Endothelial cell of umbilical vein (primary cell): ENCODE measurements at regions of chr17 and their contacts with region 1.

Region 1: GRCh38 chr17:4966844-4967538 is 626 bp downstream of the SPAG7 start:
- DNase-seq: peak; percentile 100
- H3K4me3 ChIP-seq: peak overlapping the region; percentile 14 to 87 (median 63)
- H3K27ac ChIP-seq: peak overlapping the region; percentile 69
- H3K4me1 ChIP-seq: peaks cover 24% of the 10 kb centered on the region
- H3K27me3 ChIP-seq: no peaks in the 10 kb centered on the region
- CTCF ChIP-seq: no peak
- POLR2A ChIP-seq: no peak

Region 2: GRCh38 chr17:4872786-4873185 is 94.2 kb before region 1 on chr17:
- CTCF ChIA-PET with region 1: no interaction called
- POLR2A ChIA-PET with region 1: no interaction called
- dilution Hi-C with region 1: no loop called
- intact Hi-C with region 1: no loop called
- DNase-seq: peak; percentile 75
- H3K4me3 ChIP-seq: no peak overlapping the region
- H3K27ac ChIP-seq: no peak overlapping the region
- H3K4me1 ChIP-seq: peaks cover 7% of the 10 kb centered on the region
- H3K27me3 ChIP-seq: no peaks in the 10 kb centered on the region
- CTCF ChIP-seq: no peak
- POLR2A ChIP-seq: no peak

Region 3: GRCh38 chr17:4939796-4940624 is 27.0 kb before region 1 on chr17 and contains the starts of genes RNF167 and SLC25A11:
- CTCF ChIA-PET with region 1: interaction called, 9 read pairs
- POLR2A ChIA-PET with region 1: interaction called, 15 read pairs
- dilution Hi-C with region 1: no loop called
- intact Hi-C with region 1: loop called (anchors 1 kb)
- DNase-seq: peak; percentile 100
- H3K4me3 ChIP-seq: peak within 1 kb of the TSS; percentile 45 to 84 (median 77)
- H3K27ac ChIP-seq: peak within 1 kb of the TSS; percentile 81
- H3K4me1 ChIP-seq: peaks cover 21% of the 10 kb centered on the region
- H3K27me3 ChIP-seq: no peaks in the 10 kb centered on the region
- CTCF ChIP-seq: no peak
- POLR2A ChIP-seq: peak; percentile 85
- total RNA-seq, gene RNF167: 60.2 and 61.0 TPM in 2 replicates
- total RNA-seq, gene SLC25A11: 50.2 and 58.2 TPM in 2 replicates

Region 4: DNA sequence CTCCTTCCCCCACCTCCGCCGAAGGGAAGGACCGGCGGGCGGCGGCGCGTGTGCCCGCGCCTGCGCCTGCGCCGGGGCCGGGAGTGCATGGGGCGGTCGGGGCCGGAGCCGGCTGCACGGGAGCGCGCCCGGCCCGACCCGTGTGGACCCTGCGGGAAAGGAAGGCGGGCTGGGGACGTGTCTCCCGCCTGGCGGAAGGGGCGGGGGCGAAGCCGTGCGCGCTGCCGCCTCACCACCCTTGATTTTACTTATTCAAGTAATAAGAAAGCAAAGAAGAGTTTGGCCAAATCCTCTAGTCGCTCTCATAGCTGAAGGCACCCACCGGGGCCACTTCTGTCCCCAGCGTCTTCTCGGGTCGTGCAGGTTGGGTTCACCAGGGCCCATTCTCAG is 18.1 kb before region 1 on chr17:
- CTCF ChIA-PET with region 1: interaction called, 11 read pairs
- POLR2A ChIA-PET with region 1: interaction called, 18 read pairs
- dilution Hi-C with region 1: no loop called
- intact Hi-C with region 1: loop called (anchors 1 kb)
- DNase-seq: peak; percentile 88
- H3K4me3 ChIP-seq: peak overlapping the region; percentile 81 to 99 (median 95)
- H3K27ac ChIP-seq: peak overlapping the region; percentile 90
- H3K4me1 ChIP-seq: peaks cover 44% of the 10 kb centered on the region
- H3K27me3 ChIP-seq: no peaks in the 10 kb centered on the region
- CTCF ChIP-seq: no peak
- POLR2A ChIP-seq: peak; percentile 51

Region 5: GRCh38 chr17:4956493-4957061 is 10.4 kb before region 1 on chr17:
- CTCF ChIA-PET with region 1: interaction called, 11 read pairs
- POLR2A ChIA-PET with region 1: interaction called, 15 read pairs
- dilution Hi-C with region 1: no loop called
- intact Hi-C with region 1: no loop called
- DNase-seq: no peak
- H3K4me3 ChIP-seq: no peak overlapping the region
- H3K27ac ChIP-seq: no peak overlapping the region
- H3K4me1 ChIP-seq: peaks cover 15% of the 10 kb centered on the region
- H3K27me3 ChIP-seq: no peaks in the 10 kb centered on the region
- CTCF ChIP-seq: peak; percentile 23 to 24
- POLR2A ChIP-seq: no peak